K562 (cell line): ENCODE measurements at regions of chr12 and their contacts with region 1.

Region 1: DNA sequence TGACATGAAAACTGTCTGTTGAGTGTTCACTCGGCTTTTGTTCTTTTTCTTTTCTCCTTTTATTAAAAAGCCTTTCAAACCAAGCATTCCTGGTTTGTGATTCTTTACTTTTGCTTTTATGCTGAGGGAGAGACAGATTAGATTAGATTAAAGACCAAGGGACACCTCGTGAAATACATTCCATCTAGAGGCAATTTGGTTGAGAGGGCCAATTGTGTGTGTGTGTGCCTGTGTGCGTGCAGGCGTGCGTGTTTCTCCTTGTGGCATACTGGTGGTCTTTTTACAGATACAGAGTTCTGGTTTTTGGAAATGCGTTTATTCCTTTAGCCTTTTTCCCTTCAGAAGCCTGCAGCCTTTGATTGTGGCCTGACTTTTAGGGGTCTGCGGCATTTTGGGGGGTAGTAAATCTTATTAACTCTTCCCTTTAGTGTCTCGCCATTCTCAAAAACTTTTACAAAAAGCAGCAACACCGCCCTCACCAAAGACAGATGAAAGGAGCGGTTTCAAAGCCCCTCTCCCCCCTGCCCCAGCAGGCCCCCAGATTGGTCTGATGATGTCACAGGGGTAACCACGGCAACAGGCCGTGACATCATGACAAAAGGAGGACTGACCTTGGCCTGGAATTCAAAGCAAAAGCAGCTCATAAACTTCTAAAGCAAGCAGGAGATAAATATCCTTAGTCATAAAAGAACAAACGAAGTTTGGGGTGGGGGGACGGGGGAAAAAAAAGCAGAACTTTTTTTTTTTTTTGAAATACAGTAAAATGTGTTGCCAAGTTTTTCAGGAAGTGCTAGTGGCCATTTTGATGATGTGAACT is 84.1 kb upstream of the TBX3 start:
- DNase-seq: no peak
- ATAC-seq: no peak
- H3K4me3 ChIP-seq: no peak overlapping the region
- H3K27ac ChIP-seq: no peak overlapping the region
- H3K4me1 ChIP-seq: no peaks in the 10 kb centered on the region
- H3K27me3 ChIP-seq: peaks cover 7 to 13% of the 10 kb centered on the region in 2 experiments; a peak in 4 of 5 replicates
- CTCF ChIP-seq: no peak
- EP300 ChIP-seq: no peak
- POLR2A ChIP-seq: no peak
- RAD21 ChIP-seq: no peak

Region 2: GRCh38 chr12:114794049-114794558 is 26.0 kb after region 1 on chr12:
- CTCF ChIA-PET with region 1: no interaction called
- POLR2A ChIA-PET with region 1: no interaction called
- in situ Hi-C with region 1: no loop called
- intact Hi-C with region 1: loop called (anchors 2 kb)
- DNase-seq: peak in 3 of 4 experiments; percentile 23 to 60 (median 38)
- ATAC-seq: 0 out of 3 replicates have a peak, but pooled peaks have one; percentile 47
- H3K4me3 ChIP-seq: no peak overlapping the region
- H3K27ac ChIP-seq: no peak overlapping the region
- H3K4me1 ChIP-seq: no peaks in the 10 kb centered on the region
- H3K27me3 ChIP-seq: no peaks in the 10 kb centered on the region; a peak in 1 of 5 replicates
- CTCF ChIP-seq: no peak
- EP300 ChIP-seq: no peak
- POLR2A ChIP-seq: no peak
- RAD21 ChIP-seq: no peak